Caco-2 (cell line): ENCODE measurements at regions of chr7 and their contacts with region 1.

Region 1: GRCh38 chr7:28088032-28088431 is 92.6 kb downstream of the JAZF1 start:
- DNase-seq: no peak
- H3K4me3 ChIP-seq: no peak overlapping the region
- H3K4me3 Mint-ChIP-seq: no peak overlapping the region
- H3K27ac Mint-ChIP-seq: no peak overlapping the region
- H3K4me1 ChIP-seq: no peaks in the 10 kb centered on the region
- H3K4me1 Mint-ChIP-seq: no peaks in the 10 kb centered on the region
- H3K27me3 ChIP-seq: no peaks in the 10 kb centered on the region
- H3K27me3 Mint-ChIP-seq: peaks cover 6% of the 10 kb centered on the region
- CTCF ChIP-seq: no peak

Region 2: GRCh38 chr7:28052933-28053332 is 35.1 kb before region 1 on chr7:
- CTCF ChIA-PET with region 1: no interaction called
- POLR2A ChIA-PET with region 1: no interaction called
- intact Hi-C with region 1: loop called (anchors 5 kb)
- DNase-seq: no peak
- H3K4me3 ChIP-seq: no peak overlapping the region
- H3K4me3 Mint-ChIP-seq: no peak overlapping the region
- H3K27ac Mint-ChIP-seq: no peak overlapping the region
- H3K4me1 ChIP-seq: peaks cover 7% of the 10 kb centered on the region; the same call in 1 of the 2 replicates
- H3K4me1 Mint-ChIP-seq: peaks cover 9% of the 10 kb centered on the region
- H3K27me3 ChIP-seq: no peaks in the 10 kb centered on the region
- H3K27me3 Mint-ChIP-seq: no peaks in the 10 kb centered on the region
- CTCF ChIP-seq: no peak